ENCODE measurements at regions of chr6 and their contacts with region 1.

Region 1: DNA sequence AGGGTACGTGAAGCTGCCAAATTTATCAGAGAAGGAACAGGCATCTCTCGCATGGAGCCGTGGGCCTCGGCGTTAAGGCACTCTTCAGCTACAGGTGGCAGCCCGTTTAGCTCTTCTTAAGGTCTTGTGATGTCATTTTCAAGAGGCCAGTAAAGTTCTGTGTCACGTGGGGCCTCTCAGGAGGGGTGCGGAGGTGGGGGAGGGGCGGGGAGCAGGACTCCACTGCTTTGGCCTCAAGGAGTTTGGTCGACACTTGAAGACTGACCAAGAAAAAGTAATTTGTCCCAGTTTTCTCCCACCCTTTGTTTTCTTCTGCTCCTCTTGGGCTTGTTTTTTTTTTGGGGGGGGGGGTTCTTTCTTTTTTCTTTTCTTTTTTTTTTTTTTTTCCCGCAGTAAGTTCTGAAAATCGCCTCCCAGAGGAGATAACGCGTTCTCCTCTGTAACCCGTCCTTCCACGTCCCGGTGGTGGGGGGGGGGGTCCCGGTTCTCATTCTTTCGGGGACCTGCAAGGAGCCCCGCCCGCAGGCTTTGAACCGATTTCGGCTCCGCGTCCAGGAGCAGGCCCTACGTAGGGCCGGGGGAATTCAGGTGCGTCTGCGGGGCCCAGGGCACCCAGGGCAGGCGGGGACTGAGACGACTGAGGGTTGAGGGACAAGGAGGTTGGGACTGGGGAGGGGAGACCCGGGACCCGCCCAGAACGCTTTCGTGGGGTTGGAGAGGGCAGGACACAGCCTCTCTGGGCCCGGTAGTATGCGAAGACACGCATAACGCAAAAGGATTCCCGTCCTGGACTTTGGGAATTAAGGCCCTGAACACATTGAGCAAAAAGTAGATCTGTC is 26.0 kb downstream of the GPX6 start:
- DNase-seq: peak; percentile 80 to 86
- H3K4me3 ChIP-seq: peak overlapping the region; percentile 63
- H3K27ac ChIP-seq: peak overlapping the region; percentile 64
- H3K4me1 ChIP-seq: peaks cover 24% of the 10 kb centered on the region
- H3K27me3 ChIP-seq: no peaks in the 10 kb centered on the region
- CTCF ChIP-seq: no peak

Region 2: GRCh38 chr6:26640806-26641205 is 1848.8 kb before region 1 on chr6:
- CTCF ChIA-PET with region 1: no interaction called
- POLR2A ChIA-PET with region 1: interaction called, 24 read pairs
- intact Hi-C with region 1: no loop called
- DNase-seq: no peak
- H3K4me3 ChIP-seq: no peak overlapping the region
- H3K27ac ChIP-seq: no peak overlapping the region
- H3K4me1 ChIP-seq: no peaks in the 10 kb centered on the region
- H3K27me3 ChIP-seq: no peaks in the 10 kb centered on the region
- CTCF ChIP-seq: no peak

Region 3: DNA sequence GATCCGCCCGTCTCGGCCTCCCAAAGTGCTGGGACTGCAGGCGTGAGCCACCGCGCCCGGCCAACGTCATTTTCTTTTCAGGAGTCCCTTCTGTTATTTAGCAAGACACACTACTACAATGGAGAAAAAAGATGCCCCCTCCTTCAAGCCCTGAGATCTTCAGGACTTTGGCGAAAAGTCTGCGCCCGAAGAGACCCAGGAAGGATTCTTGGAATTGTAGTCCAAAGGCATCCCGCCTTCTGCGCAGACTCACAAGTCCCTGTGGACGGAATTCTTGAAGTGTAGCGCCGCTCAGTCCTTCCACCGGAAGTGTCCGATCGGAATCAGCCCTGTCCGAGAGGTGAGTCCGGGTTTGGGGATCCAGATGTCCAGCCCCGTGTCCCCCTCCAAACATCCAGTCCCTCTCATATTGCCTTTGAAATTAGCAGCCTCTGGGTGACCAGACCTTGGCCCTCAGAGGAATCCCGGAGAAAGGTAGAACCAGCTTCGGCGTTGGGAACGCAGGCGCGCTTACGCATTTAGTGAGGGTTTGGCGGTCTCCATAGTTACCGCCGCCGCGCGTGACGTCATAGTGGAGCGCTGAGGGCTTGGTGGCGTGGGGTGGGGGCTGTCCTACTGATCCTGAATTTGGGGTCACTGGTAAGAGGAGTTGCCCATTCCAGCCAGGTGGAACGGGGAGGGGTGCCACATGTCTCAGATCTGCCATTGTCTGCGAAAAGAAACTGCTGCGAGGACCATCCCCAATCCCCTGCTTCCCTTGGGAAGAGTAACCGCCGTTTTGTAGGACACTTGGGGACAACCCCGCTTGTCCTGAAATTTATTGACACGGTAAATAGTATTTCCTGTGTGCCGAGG is 408.7 kb before region 1 on chr6:
- CTCF ChIA-PET with region 1: no interaction called
- POLR2A ChIA-PET with region 1: no interaction called
- intact Hi-C with region 1: loop called (anchors 1 kb)
- DNase-seq: peak; percentile 89 to 95
- H3K4me3 ChIP-seq: peak overlapping the region; percentile 86
- H3K27ac ChIP-seq: peak overlapping the region; percentile 98
- H3K4me1 ChIP-seq: peaks cover 15% of the 10 kb centered on the region; the same call in 1 of the 2 replicates
- H3K27me3 ChIP-seq: no peaks in the 10 kb centered on the region
- CTCF ChIP-seq: no peak

Region 4: GRCh38 chr6:28443112-28443773 is 46.3 kb before region 1 on chr6 and contains the start of gene ZSCAN23:
- CTCF ChIA-PET with region 1: no interaction called
- POLR2A ChIA-PET with region 1: interaction called, 14 read pairs
- intact Hi-C with region 1: loop called (anchors 5 kb)
- DNase-seq: peak; percentile 78
- H3K4me3 ChIP-seq: peak within 1 kb of the TSS; percentile 83
- H3K27ac ChIP-seq: no peak within 1 kb of the TSS
- H3K4me1 ChIP-seq: peaks cover 14% of the 10 kb centered on the region
- H3K27me3 ChIP-seq: no peaks in the 10 kb centered on the region
- CTCF ChIP-seq: no peak
- total RNA-seq, gene ZSCAN23: 9.1 and 12.0 TPM in 2 replicates

Region 5: DNA sequence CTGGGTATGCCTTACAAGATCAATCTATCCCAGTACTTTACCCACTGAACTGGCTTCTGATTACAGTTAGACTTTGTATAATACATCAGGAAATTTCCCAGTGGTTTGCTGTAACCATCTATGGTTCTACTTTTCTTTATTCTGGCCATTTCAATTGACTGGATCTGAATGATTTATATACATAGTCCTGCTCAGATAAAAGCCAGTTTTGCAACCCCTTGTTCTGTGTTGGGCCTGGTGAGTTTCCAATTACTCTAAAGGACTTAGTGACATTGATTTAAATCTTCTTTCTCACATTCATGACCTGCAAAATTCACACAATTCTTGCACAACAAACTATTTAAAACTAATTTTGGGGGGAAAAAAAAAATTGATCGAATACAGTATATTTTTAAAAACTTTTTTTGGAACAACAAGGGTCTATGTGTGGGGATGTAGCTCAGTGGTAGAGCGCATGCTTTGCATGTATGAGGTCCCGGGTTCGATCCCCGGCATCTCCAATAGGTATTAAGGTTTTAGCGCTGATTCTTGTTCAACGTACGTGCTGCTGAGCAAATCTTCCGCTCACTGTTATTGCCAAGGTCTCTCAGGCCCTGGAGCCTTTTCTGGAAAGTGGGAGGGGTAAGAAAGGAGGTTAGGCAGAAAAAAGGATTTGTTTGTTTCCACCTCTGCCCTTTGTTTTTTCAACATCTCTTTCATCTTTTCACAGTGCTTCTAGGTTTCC is 153.6 kb after region 1 on chr6:
- CTCF ChIA-PET with region 1: interaction called, 20 read pairs
- POLR2A ChIA-PET with region 1: no interaction called
- intact Hi-C with region 1: no loop called
- DNase-seq: peak; percentile 61 to 68
- H3K4me3 ChIP-seq: peak overlapping the region; percentile 40; the same call in 1 of the 2 replicates
- H3K27ac ChIP-seq: peak overlapping the region; percentile 33; the same call in 1 of the 2 replicates
- H3K4me1 ChIP-seq: 0 out of 2 replicates have a peak, but pooled peaks cover 5% of the 10 kb centered on the region
- H3K27me3 ChIP-seq: no peaks in the 10 kb centered on the region
- CTCF ChIP-seq: no peak

Region 6: GRCh38 chr6:28657769-28658465 is 168.3 kb after region 1 on chr6:
- CTCF ChIA-PET with region 1: no interaction called
- POLR2A ChIA-PET with region 1: no interaction called
- intact Hi-C with region 1: loop called (anchors 10 kb)
- DNase-seq: peak; percentile 49 to 60
- H3K4me3 ChIP-seq: peak overlapping the region; percentile 88
- H3K27ac ChIP-seq: no peak overlapping the region
- H3K4me1 ChIP-seq: peaks cover 17% of the 10 kb centered on the region
- H3K27me3 ChIP-seq: no peaks in the 10 kb centered on the region
- CTCF ChIP-seq: no peak

Region 7: DNA sequence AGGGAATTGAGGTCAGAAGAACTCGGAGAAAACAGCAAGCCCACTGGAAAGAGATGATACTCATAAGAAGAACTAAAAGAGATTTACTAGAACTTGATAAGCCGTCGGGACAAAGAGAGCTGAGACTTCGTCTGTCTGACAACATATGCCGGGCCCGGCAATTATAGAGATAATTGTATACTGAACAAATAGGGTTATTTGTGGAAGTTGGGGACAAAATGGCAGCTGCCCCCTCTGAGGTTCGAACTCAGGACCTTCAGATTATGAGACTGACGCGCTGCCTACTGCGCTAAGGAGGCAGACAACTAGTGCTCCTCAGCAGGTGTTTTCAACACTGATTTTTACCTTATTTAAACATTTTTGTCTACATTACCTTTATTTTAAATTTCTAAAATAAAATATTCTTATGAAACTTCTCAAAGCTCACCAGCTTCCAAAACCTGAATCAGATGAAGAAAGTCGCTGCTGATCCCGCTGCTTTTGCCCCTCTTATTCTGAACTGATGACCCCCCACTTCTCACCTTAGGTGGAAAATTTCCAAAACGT is 463.5 kb after region 1 on chr6:
- CTCF ChIA-PET with region 1: no interaction called
- POLR2A ChIA-PET with region 1: interaction called, 18 read pairs
- intact Hi-C with region 1: no loop called
- DNase-seq: peak; percentile 61 to 67
- H3K4me3 ChIP-seq: peak overlapping the region; percentile 66
- H3K27ac ChIP-seq: peak overlapping the region; percentile 41
- H3K4me1 ChIP-seq: peaks cover 34% of the 10 kb centered on the region
- H3K27me3 ChIP-seq: no peaks in the 10 kb centered on the region
- CTCF ChIP-seq: no peak

Measured in PC-9 (cell line).